Activated naive CD4-positive, alpha-beta T cell treated with anti-CD3 and anti-CD28 coated beads for 36 hours (primary cell): ENCODE measurements at regions of chrX and their contacts with region 1.

Region 1: DNA sequence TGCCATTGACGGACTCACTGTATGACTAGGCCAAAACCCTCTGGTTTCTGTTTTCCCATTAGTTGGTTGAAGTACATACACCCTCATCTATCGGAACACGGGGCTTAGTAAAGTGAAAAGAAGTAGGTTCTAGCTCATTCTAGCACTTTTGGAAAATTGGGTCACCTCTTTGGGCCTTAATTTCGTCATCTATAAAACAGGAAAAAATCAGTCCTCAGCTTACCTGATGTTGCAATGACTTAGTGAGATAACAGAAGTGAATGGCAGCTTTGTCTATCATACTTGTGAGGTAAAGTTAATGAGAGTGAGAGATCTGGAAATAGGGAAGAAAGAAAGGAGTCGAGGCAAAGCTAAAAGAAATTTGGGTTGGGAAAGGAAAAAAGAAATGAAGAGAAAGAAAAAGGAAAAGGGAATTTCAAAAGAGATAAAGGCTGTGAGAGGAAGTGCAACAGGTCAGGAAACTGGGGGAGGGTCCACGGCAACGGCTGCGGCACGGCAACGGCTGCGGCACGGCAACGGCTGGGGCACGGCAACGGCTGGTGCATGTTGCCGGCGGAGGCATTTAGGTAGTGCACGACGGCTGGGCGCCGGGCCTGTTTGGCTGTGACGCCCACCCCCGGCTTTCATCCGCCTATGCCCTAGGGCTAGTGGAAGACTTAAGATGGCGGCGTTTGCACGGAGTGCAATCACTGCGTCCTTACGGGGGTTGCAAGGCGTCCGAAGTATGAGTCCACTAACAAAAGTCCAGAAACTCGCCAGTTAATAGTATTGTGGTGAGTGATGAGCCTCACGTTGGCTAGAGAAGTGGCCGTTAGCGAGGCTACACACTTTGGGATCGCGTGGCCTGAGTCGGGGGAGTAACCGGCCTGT is 360.1 kb upstream of the ZCCHC13 start:
- DNase-seq: peak; percentile 87
- H3K4me3 Mint-ChIP-seq: peak overlapping the region; percentile 94
- H3K27ac Mint-ChIP-seq: peak overlapping the region; percentile 95
- H3K4me1 Mint-ChIP-seq: peaks cover 21% of the 10 kb centered on the region
- H3K27me3 Mint-ChIP-seq: no peaks in the 10 kb centered on the region

Region 2: DNA sequence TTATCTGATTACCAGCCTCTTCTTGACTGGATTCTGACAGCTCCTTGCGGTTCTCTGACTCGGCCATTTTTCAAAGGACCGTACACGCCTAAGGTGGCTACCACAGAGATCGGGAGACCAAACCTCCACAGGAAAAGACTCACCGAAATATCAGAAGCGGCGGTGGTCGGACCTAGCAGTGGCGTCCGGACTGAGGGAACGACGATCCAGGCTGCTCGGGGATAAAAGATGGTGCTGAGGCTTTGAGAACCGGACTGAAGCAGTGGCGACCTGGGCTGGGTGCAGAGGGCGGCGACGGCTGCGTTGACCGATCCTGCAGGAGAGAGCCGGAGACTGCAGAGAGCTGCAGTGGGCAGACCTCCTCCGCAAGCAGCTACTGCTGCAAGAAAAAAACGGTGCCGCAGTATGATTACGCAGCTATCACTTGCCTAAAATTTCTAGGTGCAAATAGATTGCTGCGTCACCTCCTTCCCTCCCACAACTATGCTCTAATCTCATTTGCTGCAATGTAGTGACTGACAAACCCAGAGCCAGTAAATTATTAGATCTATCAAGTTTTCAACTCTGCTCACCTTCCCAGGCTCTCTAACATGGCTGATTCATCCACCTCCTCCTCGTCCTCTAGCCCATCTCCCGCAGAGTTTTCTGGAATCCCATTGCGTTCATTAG is 729.4 kb before region 1 on chrX and contains the start of gene NAP1L2:
- CTCF ChIA-PET with region 1: no interaction called
- intact Hi-C with region 1: loop called (anchors 5 kb)
- DNase-seq: peak; percentile 59
- H3K4me3 Mint-ChIP-seq: peak within 1 kb of the TSS; percentile 91
- H3K27ac Mint-ChIP-seq: peak within 1 kb of the TSS; percentile 91
- H3K4me1 Mint-ChIP-seq: peaks cover 19% of the 10 kb centered on the region
- H3K27me3 Mint-ChIP-seq: peaks cover 3% of the 10 kb centered on the region
- total RNA-seq, gene NAP1L2: 2.5 to 2.7 TPM

Region 3: DNA sequence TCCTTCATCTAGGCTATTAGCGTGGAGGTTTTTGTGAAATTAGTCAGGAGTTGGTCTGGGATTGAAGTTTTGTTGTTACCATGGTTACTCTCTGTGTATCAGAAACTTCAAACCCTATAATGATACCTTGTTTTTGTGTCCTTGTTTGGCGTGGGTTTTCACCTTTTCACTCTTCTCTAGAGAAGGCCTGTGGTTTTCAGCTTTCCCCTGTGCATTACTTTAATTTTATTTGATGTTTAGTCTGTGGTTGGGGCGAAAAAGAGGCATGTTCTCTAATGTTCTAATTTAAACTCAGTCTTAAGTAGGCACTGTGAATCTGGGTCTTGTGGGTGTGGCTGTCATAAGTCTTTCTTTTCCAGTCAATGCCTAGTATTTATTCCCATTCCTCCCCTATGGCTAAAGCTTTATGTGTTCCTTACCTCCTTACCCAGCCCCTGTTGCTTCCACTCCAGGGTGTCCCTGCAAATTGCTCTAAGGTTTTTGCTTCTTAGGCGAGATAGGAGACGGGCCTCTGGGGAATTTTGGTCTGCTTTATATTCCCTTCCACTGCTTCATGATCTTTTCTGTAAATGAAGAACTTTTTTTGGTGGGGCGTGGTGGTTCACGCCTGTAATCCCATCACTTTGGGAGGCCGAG is 33.7 kb after region 1 on chrX:
- CTCF ChIA-PET with region 1: interaction called, 3 read pairs
- intact Hi-C with region 1: loop called (anchors 1 kb)
- DNase-seq: peak; percentile 16
- H3K4me3 Mint-ChIP-seq: no peak overlapping the region
- H3K27ac Mint-ChIP-seq: peak overlapping the region; percentile 36
- H3K4me1 Mint-ChIP-seq: peaks cover 30% of the 10 kb centered on the region
- H3K27me3 Mint-ChIP-seq: no peaks in the 10 kb centered on the region

Region 4: DNA sequence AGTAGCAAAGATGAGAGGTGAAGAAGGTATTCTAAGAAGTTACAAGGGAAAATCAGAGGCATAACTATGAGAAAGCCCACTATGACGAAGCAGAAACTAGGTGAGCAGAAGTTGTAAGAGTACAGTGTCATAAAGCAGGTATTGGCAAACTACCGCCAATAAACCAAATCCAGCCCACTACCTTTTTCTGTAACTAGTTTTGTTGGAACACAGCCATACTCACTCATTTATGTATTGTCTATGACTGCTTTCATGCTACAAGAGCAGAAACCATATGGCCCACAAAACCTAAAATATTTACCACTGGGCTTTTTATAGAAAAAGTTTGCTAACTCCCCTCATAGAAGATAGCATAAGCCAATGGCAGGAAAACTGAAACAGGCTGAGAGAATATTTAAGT is 328.3 kb after region 1 on chrX:
- CTCF ChIA-PET with region 1: no interaction called
- intact Hi-C with region 1: no loop called
- DNase-seq: no peak
- H3K4me3 Mint-ChIP-seq: no peak overlapping the region
- H3K27ac Mint-ChIP-seq: no peak overlapping the region
- H3K4me1 Mint-ChIP-seq: peaks cover 13% of the 10 kb centered on the region
- H3K27me3 Mint-ChIP-seq: no peaks in the 10 kb centered on the region